SK-N-SH (cell line): ENCODE measurements at regions of chr6 and their contacts with region 1.

Region 1: GRCh38 chr6:36678518-36679027 is at the start of gene CDKN1A:
- DNase-seq: peak; percentile 92
- H3K4me3 ChIP-seq: peak within 1 kb of the TSS; percentile 91 to 99
- H3K27ac ChIP-seq: peak within 1 kb of the TSS; percentile 87 to 94
- H3K4me1 ChIP-seq: peaks cover 27 to 49% of the 10 kb centered on the region in 2 experiments
- H3K27me3 ChIP-seq: no peaks in the 10 kb centered on the region
- CTCF ChIP-seq: no peak
- EP300 ChIP-seq: peak; percentile 52 to 58
- RAD21 ChIP-seq: peak; percentile 15; the same call in 1 of the 2 replicates
- polyA plus RNA-seq, gene CDKN1A: 747 and 824 TPM in 2 replicates

Region 2: GRCh38 chr6:36368921-36369865 is 309.4 kb before region 1 on chr6:
- CTCF ChIA-PET with region 1: no interaction called
- POLR2A ChIA-PET with region 1: no interaction called
- DNase-seq: no peak
- H3K4me3 ChIP-seq: no peak overlapping the region
- H3K27ac ChIP-seq: no peak overlapping the region
- H3K4me1 ChIP-seq: peaks cover 0 to 5% of the 10 kb centered on the region in 2 experiments; a peak in 1 of 4 replicates
- H3K27me3 ChIP-seq: no peaks in the 10 kb centered on the region
- CTCF ChIP-seq: no peak
- EP300 ChIP-seq: no peak
- RAD21 ChIP-seq: no peak

Region 3: DNA sequence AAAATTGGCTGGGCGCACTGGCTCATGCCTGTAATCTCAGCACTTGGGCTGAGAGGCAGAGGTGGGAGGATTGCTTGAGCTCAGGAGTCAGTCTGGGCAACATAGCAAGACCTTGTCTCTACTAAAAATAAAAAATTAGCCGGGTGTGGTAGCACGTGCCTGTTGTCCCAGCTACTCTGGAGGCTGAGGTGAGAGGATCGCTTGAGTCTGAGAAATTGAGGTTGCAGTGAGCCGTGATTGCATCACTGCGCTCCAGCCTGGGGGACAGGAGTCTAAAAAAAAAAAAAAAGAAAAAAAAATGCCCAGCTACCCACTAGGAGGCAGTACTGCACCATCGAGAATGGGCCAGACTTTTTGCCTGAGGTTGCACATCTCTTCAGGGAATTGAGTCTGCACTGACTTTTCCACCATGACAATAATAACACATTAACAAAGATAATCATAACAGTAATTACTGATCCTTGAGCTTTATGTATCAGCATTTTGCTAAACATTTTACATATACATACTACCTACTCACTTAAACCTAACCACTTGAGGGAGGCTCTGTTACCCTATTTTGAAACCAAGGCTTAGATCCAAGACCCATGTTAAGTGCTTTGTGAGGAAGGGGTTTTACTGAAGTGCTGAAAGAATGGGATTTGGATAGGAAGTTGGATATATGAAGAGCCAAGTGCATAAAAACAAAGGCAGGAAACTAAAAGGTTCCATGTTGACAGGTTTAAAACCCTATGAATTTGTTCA is 63.4 kb before region 1 on chr6:
- CTCF ChIA-PET with region 1: interaction called, 28 read pairs
- POLR2A ChIA-PET with region 1: interaction called, 3 read pairs
- DNase-seq: peak; percentile 49
- H3K4me3 ChIP-seq: no peak overlapping the region; a peak in 1 of 4 replicates
- H3K27ac ChIP-seq: peak overlapping the region; percentile 28 to 36; a peak in 2 of 4 replicates
- H3K4me1 ChIP-seq: peaks cover 15 to 23% of the 10 kb centered on the region in 2 experiments; a peak in 3 of 4 replicates
- H3K27me3 ChIP-seq: no peaks in the 10 kb centered on the region
- CTCF ChIP-seq: peak; percentile 86
- EP300 ChIP-seq: 0 out of 4 replicates have a peak, but pooled peaks of 1 of the 2 experiments have one; percentile 4
- RAD21 ChIP-seq: peak; percentile 85

Region 4: GRCh38 chr6:36623547-36624459 is 54.8 kb before region 1 on chr6:
- CTCF ChIA-PET with region 1: interaction called, 91 read pairs
- POLR2A ChIA-PET with region 1: interaction called, 3 read pairs
- DNase-seq: peak; percentile 83
- H3K4me3 ChIP-seq: no peak overlapping the region; a peak in 1 of 4 replicates
- H3K27ac ChIP-seq: no peak overlapping the region
- H3K4me1 ChIP-seq: peaks cover 0 to 11% of the 10 kb centered on the region in 2 experiments; a peak in 2 of 4 replicates
- H3K27me3 ChIP-seq: no peaks in the 10 kb centered on the region
- CTCF ChIP-seq: peak; percentile 88
- EP300 ChIP-seq: peak in 1 of 2 experiments; percentile 55; a peak in 1 of 4 replicates
- RAD21 ChIP-seq: peak; percentile 94

Region 5: DNA sequence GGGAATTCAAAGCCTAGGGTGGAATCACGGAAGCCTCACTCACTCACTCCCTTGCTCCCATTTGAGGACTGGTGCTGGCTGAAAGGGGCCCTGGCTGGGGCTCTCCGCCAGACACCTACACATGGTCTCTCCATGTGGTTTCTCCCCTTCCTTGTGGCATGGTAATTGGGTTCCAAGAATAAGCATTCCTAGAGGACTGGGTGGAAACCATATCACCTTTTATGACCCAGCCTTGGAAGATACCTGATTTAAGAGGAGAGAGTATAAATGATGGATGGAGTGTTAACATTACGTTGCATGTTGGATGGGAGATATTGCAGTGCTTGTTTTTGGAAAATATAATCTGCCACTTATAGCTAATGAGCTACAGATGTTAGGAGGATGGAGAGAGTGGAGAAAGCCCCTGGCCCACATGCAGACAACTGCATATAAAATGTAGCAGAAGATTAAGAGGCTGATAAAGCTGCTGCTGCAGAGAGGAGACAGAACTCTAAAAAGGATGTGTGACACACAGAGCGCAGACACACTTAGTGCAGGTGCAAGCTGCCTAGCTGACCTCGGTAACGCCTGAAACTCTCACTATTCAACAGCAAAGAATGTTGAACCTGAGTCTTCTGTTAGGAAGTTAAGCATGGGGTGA is 23.4 kb before region 1 on chr6:
- CTCF ChIA-PET with region 1: interaction called, 6 read pairs
- POLR2A ChIA-PET with region 1: interaction called, 12 read pairs
- DNase-seq: peak; percentile 80
- H3K4me3 ChIP-seq: no peak overlapping the region
- H3K27ac ChIP-seq: peak overlapping the region in 1 of 2 experiments; percentile 94; a peak in 2 of 4 replicates
- H3K4me1 ChIP-seq: peaks cover 6 to 15% of the 10 kb centered on the region in 2 experiments; a peak in 2 of 4 replicates
- H3K27me3 ChIP-seq: peaks cover under 1% of the 10 kb centered on the region; the same call in 1 of the 2 replicates
- CTCF ChIP-seq: no peak
- EP300 ChIP-seq: peak in 1 of 2 experiments; percentile 58; a peak in 2 of 4 replicates
- RAD21 ChIP-seq: peak; percentile 24; the same call in 1 of the 2 replicates

Region 6: GRCh38 chr6:36666726-36667591 is 11.6 kb before region 1 on chr6:
- CTCF ChIA-PET with region 1: interaction called, 12 read pairs
- POLR2A ChIA-PET with region 1: interaction called, 24 read pairs
- DNase-seq: peak; percentile 62
- H3K4me3 ChIP-seq: no peak overlapping the region
- H3K27ac ChIP-seq: peak overlapping the region; percentile 89 to 95
- H3K4me1 ChIP-seq: peaks cover 19 to 24% of the 10 kb centered on the region in 2 experiments
- H3K27me3 ChIP-seq: no peaks in the 10 kb centered on the region
- CTCF ChIP-seq: no peak
- EP300 ChIP-seq: peak in 1 of 2 experiments; percentile 52; a peak in 1 of 4 replicates
- RAD21 ChIP-seq: no peak; the same call in 1 of the 2 replicates